ENCODE measurements at regions of chr2 and their contacts with region 1.

Region 1: GRCh38 chr2:172102391-172103278 is at the start of gene DLX2:
- DNase-seq: peak; percentile 74 to 82 (median 75)
- H3K4me3 ChIP-seq: peak within 1 kb of the TSS; percentile 38 to 75 (median 44)
- H3K4me3 Mint-ChIP-seq: peak within 1 kb of the TSS; percentile 86 to 95
- H3K27ac ChIP-seq: no peak within 1 kb of the TSS
- H3K27ac Mint-ChIP-seq: peak within 1 kb of the TSS in 6 of 7 donors; percentile 63 to 92 (median 82)
- H3K4me1 ChIP-seq: peaks cover 69 to 75% of the 10 kb centered on the region in 2 donors
- H3K4me1 Mint-ChIP-seq: peaks cover 68% of the 10 kb centered on the region
- H3K27me3 ChIP-seq: peaks cover 76 to 96% of the 10 kb centered on the region in 2 donors
- H3K27me3 Mint-ChIP-seq: peaks cover 90 to 99% (median 95%) of the 10 kb centered on the region in 3 donors
- CTCF ChIP-seq: no peak
- polyA plus RNA-seq, gene DLX2: 0.08 TPM in 1 of 3 donors, not detected in the others

Region 2: GRCh38 chr2:171574149-171574795 is 528.4 kb before region 1 on chr2:
- intact Hi-C with region 1: loop called in 1 of 2 experiments (anchors 10 kb)
- DNase-seq: peak; percentile 71 to 80 (median 79)
- H3K4me3 ChIP-seq: no peak overlapping the region
- H3K4me3 Mint-ChIP-seq: peak overlapping the region in 1 of 2 donors; percentile 63
- H3K27ac ChIP-seq: no peak overlapping the region
- H3K27ac Mint-ChIP-seq: no peak overlapping the region
- H3K4me1 ChIP-seq: no peaks in the 10 kb centered on the region
- H3K4me1 Mint-ChIP-seq: peaks cover 4% of the 10 kb centered on the region
- H3K27me3 ChIP-seq: no peaks in the 10 kb centered on the region
- H3K27me3 Mint-ChIP-seq: peaks cover 4 to 6% (median 4%) of the 10 kb centered on the region in 3 donors
- CTCF ChIP-seq: peak; percentile 96

Region 3: DNA sequence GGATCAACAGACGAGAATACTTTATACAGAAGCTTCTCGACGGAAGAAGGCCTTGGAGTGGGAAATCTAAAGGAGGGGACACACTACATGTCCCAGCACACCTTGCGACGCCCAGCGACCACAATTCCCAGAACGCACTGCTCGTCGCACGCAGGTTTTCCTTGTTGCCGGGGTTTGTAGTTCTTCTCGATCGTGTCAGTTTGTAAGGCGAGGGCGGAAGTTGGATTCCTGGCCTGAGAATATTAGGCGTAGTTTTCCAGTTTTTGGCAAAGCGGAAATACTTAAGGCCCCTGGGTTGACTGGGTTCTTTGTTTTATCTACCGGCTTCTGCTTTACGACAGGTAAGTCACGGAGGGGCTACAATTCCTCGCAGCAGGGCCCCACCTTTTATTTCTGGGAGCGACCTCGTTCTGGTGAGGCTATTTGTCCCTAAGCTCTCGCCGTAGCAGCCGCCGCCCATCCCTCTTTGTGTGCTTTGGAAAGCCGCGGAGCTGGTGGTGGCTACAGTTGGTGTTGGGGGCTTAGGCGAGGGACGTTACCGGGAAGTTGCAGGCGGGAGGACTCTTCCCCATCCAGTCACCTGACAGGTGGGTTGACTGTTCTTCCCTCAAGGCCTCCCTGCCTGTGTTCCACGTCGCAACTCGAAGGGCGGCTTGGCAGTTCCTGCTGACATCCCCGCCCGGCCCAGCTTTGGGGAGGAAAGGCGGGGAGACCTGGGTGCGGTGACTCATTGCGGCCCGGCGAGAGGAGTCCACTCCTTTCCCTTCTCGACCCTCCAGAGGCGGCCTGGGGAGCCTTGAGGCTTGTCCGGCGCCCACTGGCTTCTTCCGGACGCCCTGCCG is 415.1 kb before region 1 on chr2 and contains the start of gene DYNC1I2:
- intact Hi-C with region 1: loop called in 1 of 2 experiments (anchors 5 kb)
- DNase-seq: peak; percentile 68 to 85 (median 81)
- H3K4me3 ChIP-seq: peak within 1 kb of the TSS; percentile 63 to 88 (median 82)
- H3K4me3 Mint-ChIP-seq: peak within 1 kb of the TSS; percentile 91 to 97
- H3K27ac ChIP-seq: peak within 1 kb of the TSS; percentile 48 to 84
- H3K27ac Mint-ChIP-seq: peak within 1 kb of the TSS; percentile 86 to 96 (median 95)
- H3K4me1 ChIP-seq: peaks cover 10 to 16% of the 10 kb centered on the region in 2 donors
- H3K4me1 Mint-ChIP-seq: peaks cover 20% of the 10 kb centered on the region
- H3K27me3 ChIP-seq: peaks cover under 1 to 8% of the 10 kb centered on the region in 2 donors
- H3K27me3 Mint-ChIP-seq: peaks cover 2 to 9% (median 6%) of the 10 kb centered on the region in 3 donors
- CTCF ChIP-seq: no peak
- polyA plus RNA-seq, gene DYNC1I2: 30.8 to 39.1 (median 32.2) TPM

Region 4: GRCh38 chr2:171703574-171704347 is 398.9 kb before region 1 on chr2:
- intact Hi-C with region 1: loop called in 1 of 2 experiments (anchors 5 kb)
- DNase-seq: peak; percentile 1 to 21 (median 15)
- H3K4me3 ChIP-seq: no peak overlapping the region
- H3K4me3 Mint-ChIP-seq: no peak overlapping the region
- H3K27ac ChIP-seq: no peak overlapping the region
- H3K27ac Mint-ChIP-seq: peak overlapping the region in 1 of 7 donors; percentile 61
- H3K4me1 ChIP-seq: no peaks in the 10 kb centered on the region
- H3K4me1 Mint-ChIP-seq: peaks cover 11% of the 10 kb centered on the region
- H3K27me3 ChIP-seq: no peaks in the 10 kb centered on the region
- H3K27me3 Mint-ChIP-seq: no peaks in the 10 kb centered on the region
- CTCF ChIP-seq: no peak

Region 5: DNA sequence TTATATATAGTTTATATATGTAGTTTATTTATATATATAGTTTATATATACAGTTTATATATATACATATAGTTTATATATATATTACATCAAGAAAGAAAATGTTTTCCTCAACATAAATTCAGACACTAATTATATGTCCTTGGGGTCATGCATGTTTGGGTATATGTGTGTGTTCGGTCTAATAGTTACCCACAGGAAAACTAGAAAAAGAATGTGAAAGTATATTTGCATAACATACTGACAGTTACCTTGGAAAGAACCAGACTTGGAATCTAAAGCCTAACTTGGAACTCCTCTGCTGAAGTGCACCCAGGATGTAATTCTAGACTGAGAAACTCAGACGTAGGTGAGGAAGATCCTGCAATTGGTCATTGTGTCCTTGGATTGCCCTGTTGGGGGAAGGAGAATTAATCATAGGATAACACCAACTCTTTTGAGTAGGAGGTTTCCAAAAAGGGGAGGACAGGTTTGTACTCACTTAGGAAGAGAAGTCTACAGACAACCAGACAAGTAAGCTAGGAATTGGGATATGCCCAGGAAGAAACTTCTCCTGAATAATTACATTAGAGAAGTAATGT is 199.7 kb before region 1 on chr2:
- intact Hi-C with region 1: no loop called
- DNase-seq: no peak
- H3K4me3 ChIP-seq: no peak overlapping the region
- H3K4me3 Mint-ChIP-seq: no peak overlapping the region
- H3K27ac ChIP-seq: no peak overlapping the region
- H3K27ac Mint-ChIP-seq: no peak overlapping the region
- H3K4me1 ChIP-seq: no peaks in the 10 kb centered on the region
- H3K4me1 Mint-ChIP-seq: no peaks in the 10 kb centered on the region
- H3K27me3 ChIP-seq: no peaks in the 10 kb centered on the region
- H3K27me3 Mint-ChIP-seq: peaks cover 3 to 11% (median 6%) of the 10 kb centered on the region in 3 donors
- CTCF ChIP-seq: no peak

Region 6: DNA sequence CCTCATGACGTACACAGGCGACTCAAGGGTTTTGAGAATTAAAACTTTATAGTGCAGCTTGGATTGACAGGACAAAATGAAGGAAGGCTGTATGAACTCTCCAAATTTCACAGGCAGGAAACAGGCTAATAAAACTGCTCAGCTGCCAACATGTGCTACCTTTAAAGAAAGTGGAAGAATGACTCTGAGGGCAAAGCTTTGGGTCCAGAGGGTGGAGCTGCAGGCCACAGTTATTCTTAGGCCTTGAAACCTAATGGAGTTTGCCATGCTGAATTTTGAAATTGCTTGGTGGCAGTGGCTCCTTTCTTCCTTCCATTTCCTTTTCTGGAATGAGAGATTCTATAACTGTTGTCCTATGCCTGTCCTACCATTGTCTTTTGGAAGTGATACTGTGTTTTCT is 145.6 kb before region 1 on chr2:
- intact Hi-C with region 1: loop called in 1 of 2 experiments (anchors 5 kb)
- DNase-seq: peak in 2 of 3 donors; percentile 17 to 27
- H3K4me3 ChIP-seq: peak overlapping the region in 1 of 3 experiments; percentile 18
- H3K4me3 Mint-ChIP-seq: no peak overlapping the region
- H3K27ac ChIP-seq: peak overlapping the region; percentile 36 to 93
- H3K27ac Mint-ChIP-seq: peak overlapping the region; percentile 71 to 91 (median 85)
- H3K4me1 ChIP-seq: peaks cover 69 to 76% of the 10 kb centered on the region in 2 donors
- H3K4me1 Mint-ChIP-seq: peaks cover 53% of the 10 kb centered on the region
- H3K27me3 ChIP-seq: no peaks in the 10 kb centered on the region
- H3K27me3 Mint-ChIP-seq: peaks cover 0 to 2% (median 0%) of the 10 kb centered on the region in 3 donors
- CTCF ChIP-seq: peak; percentile 14

Region 7: GRCh38 chr2:172084734-172085459 is 17.7 kb before region 1 on chr2:
- intact Hi-C with region 1: loop called in 1 of 2 experiments (anchors 2 kb)
- DNase-seq: peak; percentile 88 to 93 (median 93)
- H3K4me3 ChIP-seq: peak overlapping the region; percentile 20 to 81 (median 53)
- H3K4me3 Mint-ChIP-seq: peak overlapping the region; percentile 82 to 91
- H3K27ac ChIP-seq: no peak overlapping the region
- H3K27ac Mint-ChIP-seq: peak overlapping the region in 1 of 7 donors; percentile 79
- H3K4me1 ChIP-seq: peaks cover 73 to 81% of the 10 kb centered on the region in 2 donors
- H3K4me1 Mint-ChIP-seq: peaks cover 81% of the 10 kb centered on the region
- H3K27me3 ChIP-seq: peaks cover 90 to 100% of the 10 kb centered on the region in 2 donors
- H3K27me3 Mint-ChIP-seq: peaks cover 96 to 100% (median 99%) of the 10 kb centered on the region in 3 donors
- CTCF ChIP-seq: no peak